Left cardiac atrium (tissue), 4 donors: ENCODE measurements at regions of chr17 and their contacts with region 1.

Region 1: DNA sequence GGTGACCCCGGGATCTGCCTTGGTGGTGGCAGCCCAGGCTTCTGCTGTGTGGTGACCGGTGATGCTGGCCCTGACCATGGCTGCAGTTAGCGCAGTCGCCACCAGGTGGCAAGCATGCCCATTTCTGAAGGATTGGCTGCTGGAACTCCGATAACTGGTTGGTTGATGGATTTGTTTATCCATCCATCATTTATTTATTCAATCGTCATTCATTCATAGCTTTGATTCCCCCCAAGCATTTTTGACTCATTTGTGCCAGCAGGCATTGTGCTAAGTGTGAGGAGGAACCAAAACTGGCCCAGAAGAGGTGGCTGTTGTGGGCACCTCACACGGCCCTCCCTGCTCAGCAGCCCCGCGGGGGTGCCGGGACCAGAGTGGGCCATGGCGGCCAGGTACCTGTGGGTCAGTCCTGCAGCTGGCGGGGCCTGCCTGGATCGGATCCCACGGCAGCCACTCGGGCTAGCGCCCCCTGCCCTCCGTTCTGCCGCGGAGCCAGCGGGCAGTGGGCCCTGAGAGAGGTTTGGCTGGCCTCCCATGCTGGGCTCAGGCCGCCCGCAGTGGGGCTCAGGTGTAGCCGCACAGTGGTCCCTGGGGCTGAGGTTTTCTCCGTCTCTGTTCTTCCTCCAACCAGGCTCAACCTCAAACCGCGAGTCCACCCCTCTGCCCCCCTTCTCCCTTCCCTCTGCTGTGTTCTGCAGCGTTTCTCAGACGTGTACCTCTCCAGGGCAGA is 28.8 kb upstream of the ITGA3 start:
- DNase-seq: peak; percentile 83
- ATAC-seq: peak; percentile 81 to 83

Region 2: GRCh38 chr17:49899191-49899485 is 127.9 kb before region 1 on chr17:
- intact Hi-C with region 1: no loop called
- DNase-seq: no peak
- ATAC-seq: no peak

Region 3: GRCh38 chr17:50087246-50087911 is 60.3 kb after region 1 on chr17:
- intact Hi-C with region 1: loop called (anchors 1 to 2 kb)
- DNase-seq: peak; percentile 79
- ATAC-seq: peak; percentile 87 to 90